CD8-positive, alpha-beta T cell (primary cell): ENCODE measurements at regions of chr2 and their contacts with region 1.

Region 1: DNA sequence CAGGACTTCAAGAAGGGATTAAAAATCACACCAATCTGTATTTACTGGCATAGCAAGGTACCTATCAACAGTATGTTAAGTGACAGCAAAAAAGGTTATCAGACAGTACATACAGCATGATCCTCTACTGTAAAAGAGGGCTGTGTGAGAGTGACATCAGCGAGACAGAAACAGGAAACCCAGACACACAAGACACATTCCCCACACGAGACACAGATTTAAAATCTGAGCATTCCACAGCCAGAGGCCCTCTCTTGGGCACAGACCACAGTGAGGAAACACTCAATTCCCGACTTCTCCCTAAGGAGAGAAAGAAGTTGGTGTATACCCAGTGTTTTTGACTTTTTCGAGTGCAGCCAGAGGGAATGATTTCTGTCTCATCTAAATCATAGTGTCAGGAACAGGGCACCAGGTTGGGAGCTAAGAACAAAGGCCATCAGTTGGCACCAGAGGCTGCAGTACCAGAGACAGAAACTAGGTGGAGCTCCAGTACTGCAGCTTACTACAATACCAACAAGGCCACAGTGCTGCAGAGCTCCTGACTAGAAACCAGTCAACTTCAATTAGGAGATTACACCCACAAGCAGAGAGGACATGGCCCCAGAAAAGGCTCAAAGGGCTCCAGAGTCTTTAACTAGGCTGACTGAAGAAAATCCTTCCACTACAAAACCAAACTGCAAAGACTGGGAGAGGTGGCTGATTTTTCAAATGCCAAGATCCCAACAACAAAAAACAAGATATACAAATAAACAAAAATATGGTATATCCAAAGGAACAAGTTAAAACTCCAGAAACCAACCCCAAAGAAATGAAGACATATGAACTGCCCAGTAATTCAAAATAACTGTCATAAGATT is 41.0 kb downstream of the UNC50 start:
- DNase-seq: peak; percentile 73 to 92 (median 83)
- ATAC-seq: peak; percentile 92
- H3K4me3 ChIP-seq: no peak overlapping the region
- H3K4me3 Mint-ChIP-seq: peak overlapping the region; percentile 37
- H3K27ac ChIP-seq: peak overlapping the region in 1 of 2 experiments; percentile 47
- H3K27ac Mint-ChIP-seq: peak overlapping the region; percentile 99
- H3K4me1 ChIP-seq: peaks cover 52% of the 10 kb centered on the region
- H3K4me1 Mint-ChIP-seq: peaks cover 63% of the 10 kb centered on the region
- H3K27me3 ChIP-seq: no peaks in the 10 kb centered on the region
- H3K27me3 Mint-ChIP-seq: no peaks in the 10 kb centered on the region
- CTCF ChIP-seq: peak; percentile 98

Region 2: GRCh38 chr2:98556344-98557033 is 92.9 kb before region 1 on chr2:
- CTCF ChIA-PET with region 1: no interaction called
- POLR2A ChIA-PET with region 1: no interaction called
- intact Hi-C with region 1: no loop called
- DNase-seq: peak in 1 of 9 experiments; percentile 37
- ATAC-seq: peak; percentile 71
- H3K4me3 ChIP-seq: no peak overlapping the region
- H3K4me3 Mint-ChIP-seq: no peak overlapping the region
- H3K27ac ChIP-seq: no peak overlapping the region
- H3K27ac Mint-ChIP-seq: peak overlapping the region; percentile 78
- H3K4me1 ChIP-seq: peaks cover 14% of the 10 kb centered on the region
- H3K4me1 Mint-ChIP-seq: peaks cover 57% of the 10 kb centered on the region
- H3K27me3 ChIP-seq: no peaks in the 10 kb centered on the region
- H3K27me3 Mint-ChIP-seq: no peaks in the 10 kb centered on the region
- CTCF ChIP-seq: no peak

Region 3: GRCh38 chr2:98634401-98635092 is 14.8 kb before region 1 on chr2:
- CTCF ChIA-PET with region 1: interaction called, 16 read pairs
- POLR2A ChIA-PET with region 1: interaction called, 4 read pairs
- intact Hi-C with region 1: loop called (anchors 2 kb)
- DNase-seq: peak in 6 of 9 experiments; percentile 26 to 84 (median 64)
- ATAC-seq: peak; percentile 52
- H3K4me3 ChIP-seq: no peak overlapping the region
- H3K4me3 Mint-ChIP-seq: peak overlapping the region; percentile 63
- H3K27ac ChIP-seq: peak overlapping the region; percentile 12 to 87
- H3K27ac Mint-ChIP-seq: peak overlapping the region; percentile 96
- H3K4me1 ChIP-seq: peaks cover 49% of the 10 kb centered on the region
- H3K4me1 Mint-ChIP-seq: peaks cover 48% of the 10 kb centered on the region
- H3K27me3 ChIP-seq: no peaks in the 10 kb centered on the region
- H3K27me3 Mint-ChIP-seq: no peaks in the 10 kb centered on the region
- CTCF ChIP-seq: peak; percentile 54

Region 4: GRCh38 chr2:98685930-98686887 is 36.8 kb after region 1 on chr2:
- CTCF ChIA-PET with region 1: interaction called, 13 read pairs
- POLR2A ChIA-PET with region 1: interaction called, 4 read pairs
- intact Hi-C with region 1: no loop called
- DNase-seq: no peak
- ATAC-seq: no peak
- H3K4me3 ChIP-seq: no peak overlapping the region
- H3K4me3 Mint-ChIP-seq: no peak overlapping the region
- H3K27ac ChIP-seq: no peak overlapping the region
- H3K27ac Mint-ChIP-seq: peak overlapping the region; percentile 94
- H3K4me1 ChIP-seq: peaks cover 75% of the 10 kb centered on the region
- H3K4me1 Mint-ChIP-seq: peaks cover 87% of the 10 kb centered on the region
- H3K27me3 ChIP-seq: no peaks in the 10 kb centered on the region
- H3K27me3 Mint-ChIP-seq: no peaks in the 10 kb centered on the region
- CTCF ChIP-seq: no peak

Region 5: DNA sequence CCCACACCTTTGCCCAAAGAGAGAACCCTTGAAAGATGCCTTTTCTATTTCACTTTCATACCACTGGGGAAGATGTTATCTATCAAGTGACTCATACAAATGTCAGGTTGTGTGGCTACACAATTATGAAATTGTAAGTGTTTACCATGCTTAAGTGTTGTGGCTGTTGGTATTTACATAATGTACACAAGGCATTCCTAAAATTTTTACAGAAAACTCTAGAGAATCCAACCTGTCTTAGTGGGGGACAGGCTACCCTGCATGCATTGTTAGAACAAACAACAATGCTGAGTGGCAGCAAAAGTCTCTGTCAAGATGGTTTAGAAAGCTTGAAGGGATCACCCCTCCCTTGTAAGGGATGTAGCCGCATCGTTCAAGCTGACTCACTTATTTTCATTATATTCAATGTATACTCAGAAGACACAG is 87.1 kb after region 1 on chr2:
- CTCF ChIA-PET with region 1: interaction called, 16 read pairs
- POLR2A ChIA-PET with region 1: interaction called, 8 read pairs
- intact Hi-C with region 1: no loop called
- DNase-seq: peak in 2 of 9 experiments; percentile 32 to 49
- ATAC-seq: peak; percentile 58
- H3K4me3 ChIP-seq: no peak overlapping the region
- H3K4me3 Mint-ChIP-seq: peak overlapping the region; percentile 22
- H3K27ac ChIP-seq: peak overlapping the region in 1 of 2 experiments; percentile 39
- H3K27ac Mint-ChIP-seq: peak overlapping the region; percentile 82
- H3K4me1 ChIP-seq: peaks cover 63% of the 10 kb centered on the region
- H3K4me1 Mint-ChIP-seq: peaks cover 76% of the 10 kb centered on the region
- H3K27me3 ChIP-seq: no peaks in the 10 kb centered on the region
- H3K27me3 Mint-ChIP-seq: no peaks in the 10 kb centered on the region
- CTCF ChIP-seq: no peak

Region 6: DNA sequence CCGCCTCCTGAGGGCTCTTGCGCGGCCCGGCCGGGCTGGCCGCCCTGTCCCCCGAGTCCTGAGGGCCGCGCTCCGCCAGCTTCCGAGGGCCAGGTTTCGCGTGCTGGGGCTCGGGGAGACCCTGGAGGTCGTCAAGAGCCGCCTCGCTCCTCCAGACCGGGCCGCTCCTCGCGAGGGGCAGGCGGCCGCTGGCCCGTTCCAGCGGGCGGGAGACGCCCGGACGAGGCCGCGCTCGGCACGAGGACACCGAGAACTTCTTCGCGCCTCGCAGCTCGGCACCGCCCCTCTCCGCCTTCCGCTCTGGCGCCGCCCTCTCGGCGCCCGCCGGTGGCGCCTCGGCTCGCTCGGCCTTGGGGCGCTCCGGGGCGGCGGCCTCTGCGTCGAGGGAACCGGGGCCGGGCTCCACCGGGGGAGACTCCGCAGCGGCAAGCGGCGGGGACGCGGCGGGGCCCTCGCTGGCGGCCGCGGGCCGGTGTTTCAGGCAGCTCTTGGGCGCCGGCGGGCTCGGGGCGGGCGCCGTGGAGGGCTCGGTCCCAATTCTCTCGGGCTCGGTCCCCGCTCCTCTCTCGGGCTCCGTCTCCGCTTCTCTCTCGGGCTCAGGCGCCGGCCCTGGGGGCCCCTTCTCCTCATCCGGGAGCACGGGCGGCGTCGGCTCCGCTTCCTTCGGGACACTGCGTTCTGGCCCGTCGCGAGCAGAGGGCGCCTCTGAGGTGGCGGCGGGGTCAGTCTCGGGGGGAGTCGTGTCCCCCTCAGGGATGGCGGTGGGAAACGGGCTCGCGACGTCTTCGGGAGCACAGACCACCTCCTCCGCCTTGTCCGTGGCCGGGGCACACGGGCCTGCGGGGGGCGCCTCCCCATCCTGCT is 173.2 kb after region 1 on chr2:
- CTCF ChIA-PET with region 1: interaction called, 13 read pairs
- POLR2A ChIA-PET with region 1: no interaction called
- intact Hi-C with region 1: no loop called
- DNase-seq: peak; percentile 37 to 83 (median 58)
- ATAC-seq: peak; percentile 91
- H3K4me3 ChIP-seq: peak overlapping the region; percentile 50 to 53
- H3K4me3 Mint-ChIP-seq: peak overlapping the region; percentile 58
- H3K27ac ChIP-seq: peak overlapping the region in 1 of 2 experiments; percentile 24
- H3K27ac Mint-ChIP-seq: no peak overlapping the region
- H3K4me1 ChIP-seq: peaks cover under 1% of the 10 kb centered on the region
- H3K4me1 Mint-ChIP-seq: peaks cover 22% of the 10 kb centered on the region
- H3K27me3 ChIP-seq: no peaks in the 10 kb centered on the region
- H3K27me3 Mint-ChIP-seq: no peaks in the 10 kb centered on the region
- CTCF ChIP-seq: peak; percentile 19

Region 7: DNA sequence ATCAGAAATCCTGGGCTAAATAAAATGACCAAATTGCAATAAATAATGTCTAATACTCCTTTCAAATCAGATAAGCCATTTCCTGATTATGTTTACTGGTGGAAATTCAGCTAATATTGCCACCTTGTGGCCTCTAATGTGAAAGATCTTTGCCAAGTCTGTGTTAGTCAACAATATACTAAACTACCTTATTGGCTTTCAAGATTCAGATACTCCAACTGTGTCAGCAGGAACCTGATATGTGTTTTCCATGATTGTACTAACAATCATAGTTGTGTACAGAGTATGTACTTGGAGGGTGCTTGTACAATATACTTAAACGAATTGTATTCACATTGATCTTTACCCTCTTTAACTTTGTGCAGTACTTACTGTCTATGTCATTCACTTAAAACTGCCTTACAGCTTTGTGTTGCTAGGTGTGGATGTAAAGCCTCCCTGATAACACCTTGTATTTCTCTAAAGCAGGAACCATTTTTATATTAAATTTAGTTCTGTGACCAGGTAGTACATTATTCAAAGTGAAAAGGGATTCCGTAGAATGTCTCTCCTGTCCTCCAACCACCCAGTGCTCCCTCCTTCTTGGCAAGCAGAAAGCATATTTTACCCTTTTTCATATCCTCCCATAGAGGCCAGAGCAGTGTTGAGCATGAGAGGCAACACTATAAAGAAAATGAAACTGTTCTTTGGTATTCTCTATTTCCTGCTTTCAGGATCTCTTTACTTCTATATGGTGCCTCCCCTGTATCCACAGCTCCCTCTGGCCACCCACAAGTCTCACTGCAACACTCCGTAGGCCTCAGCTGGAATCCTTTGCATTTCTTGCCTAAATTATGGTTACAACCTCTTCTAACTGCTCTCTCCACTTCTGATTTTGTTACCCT is 417.0 kb after region 1 on chr2:
- CTCF ChIA-PET with region 1: interaction called, 5 read pairs
- POLR2A ChIA-PET with region 1: no interaction called
- intact Hi-C with region 1: loop called in 1 of 2 experiments (anchors 5 kb)
- DNase-seq: peak in 3 of 9 experiments; percentile 29 to 75 (median 45)
- ATAC-seq: peak; percentile 93
- H3K4me3 ChIP-seq: no peak overlapping the region
- H3K4me3 Mint-ChIP-seq: no peak overlapping the region
- H3K27ac ChIP-seq: peak overlapping the region in 1 of 2 experiments; percentile 70
- H3K27ac Mint-ChIP-seq: no peak overlapping the region
- H3K4me1 ChIP-seq: peaks cover 13% of the 10 kb centered on the region
- H3K4me1 Mint-ChIP-seq: peaks cover 2% of the 10 kb centered on the region
- H3K27me3 ChIP-seq: no peaks in the 10 kb centered on the region
- H3K27me3 Mint-ChIP-seq: no peaks in the 10 kb centered on the region
- CTCF ChIP-seq: no peak